Activated CD8-positive, alpha-beta T cell treated with anti-CD3 and anti-CD28 coated beads for 36 hours (primary cell): ENCODE measurements at regions of chr2 and their contacts with region 1.

Region 1: GRCh38 chr2:196239622-196240587 is 68.5 kb upstream of the STK17B start:
- DNase-seq: peak; percentile 94
- ATAC-seq: peak; percentile 64
- H3K4me3 Mint-ChIP-seq: peak overlapping the region; percentile 81
- H3K27ac Mint-ChIP-seq: peak overlapping the region; percentile 87
- H3K4me1 Mint-ChIP-seq: peaks cover 70% of the 10 kb centered on the region
- H3K27me3 Mint-ChIP-seq: no peaks in the 10 kb centered on the region
- CTCF ChIP-seq: no peak

Region 2: DNA sequence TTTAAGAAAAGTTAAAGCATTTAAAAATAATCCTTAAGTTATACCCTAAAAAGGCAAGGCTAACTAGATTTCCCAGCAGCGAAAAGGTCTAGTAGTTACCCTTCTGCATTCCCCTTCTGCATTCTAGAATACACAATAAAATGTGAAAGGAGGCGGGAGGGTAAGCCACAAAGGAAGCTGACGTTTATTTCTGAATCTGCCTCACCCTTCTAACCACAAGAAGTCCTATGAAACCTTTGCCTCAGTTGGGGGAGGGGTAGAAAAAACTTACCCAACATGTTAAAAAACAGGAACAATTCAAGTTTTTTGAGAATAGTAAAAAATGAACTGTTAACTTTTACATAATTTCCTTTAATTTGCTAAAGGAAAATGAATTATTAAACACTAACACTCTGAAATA is 79.8 kb before region 1 on chr2:
- CTCF ChIA-PET with region 1: interaction called, 3 read pairs
- POLR2A ChIA-PET with region 1: interaction called, 56 read pairs
- intact Hi-C with region 1: no loop called
- DNase-seq: peak; percentile 84
- ATAC-seq: peak; percentile 40
- H3K4me3 Mint-ChIP-seq: peak overlapping the region; percentile 99
- H3K27ac Mint-ChIP-seq: peak overlapping the region; percentile 83
- H3K4me1 Mint-ChIP-seq: peaks cover 49% of the 10 kb centered on the region
- H3K27me3 Mint-ChIP-seq: no peaks in the 10 kb centered on the region
- CTCF ChIP-seq: no peak

Region 3: DNA sequence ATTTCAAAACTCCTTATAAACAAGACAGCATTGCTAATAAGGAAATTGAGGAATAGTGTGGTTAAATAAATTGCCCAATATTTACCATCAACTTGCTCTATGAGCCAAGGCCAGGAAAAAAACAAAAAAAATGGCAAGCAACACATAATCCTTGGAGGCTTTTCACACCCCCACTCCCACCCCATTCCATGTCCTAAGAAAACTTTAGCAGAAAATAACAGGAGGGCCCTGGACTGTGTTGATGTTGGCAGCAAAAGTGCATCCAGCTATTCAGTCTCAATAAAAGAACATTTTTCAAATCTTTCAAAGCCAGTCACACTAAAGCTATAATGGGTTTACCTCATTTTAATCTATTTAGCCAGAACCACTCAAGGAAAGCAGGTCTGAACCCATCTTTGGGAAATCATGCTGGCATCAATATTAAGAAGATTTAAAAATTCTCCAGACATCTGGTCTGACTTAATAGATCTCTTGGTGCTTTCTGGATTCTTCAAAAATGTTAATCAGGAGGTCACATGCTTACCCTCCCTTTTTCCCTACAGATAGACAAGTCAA is 33.9 kb before region 1 on chr2:
- CTCF ChIA-PET with region 1: interaction called, 4 read pairs
- POLR2A ChIA-PET with region 1: interaction called, 3 read pairs
- intact Hi-C with region 1: loop called (anchors 1 kb)
- DNase-seq: no peak
- ATAC-seq: no peak
- H3K4me3 Mint-ChIP-seq: no peak overlapping the region
- H3K27ac Mint-ChIP-seq: no peak overlapping the region
- H3K4me1 Mint-ChIP-seq: peaks cover 39% of the 10 kb centered on the region
- H3K27me3 Mint-ChIP-seq: no peaks in the 10 kb centered on the region
- CTCF ChIP-seq: no peak

Region 4: GRCh38 chr2:196225213-196225612 is 14.7 kb before region 1 on chr2:
- CTCF ChIA-PET with region 1: interaction called, 65 read pairs
- POLR2A ChIA-PET with region 1: interaction called, 14 read pairs
- intact Hi-C with region 1: no loop called
- DNase-seq: no peak
- ATAC-seq: no peak
- H3K4me3 Mint-ChIP-seq: peak overlapping the region; percentile 22
- H3K27ac Mint-ChIP-seq: peak overlapping the region; percentile 61
- H3K4me1 Mint-ChIP-seq: peaks cover 84% of the 10 kb centered on the region
- H3K27me3 Mint-ChIP-seq: no peaks in the 10 kb centered on the region
- CTCF ChIP-seq: no peak

Region 5: GRCh38 chr2:196441527-196441926 is 201.6 kb after region 1 on chr2:
- CTCF ChIA-PET with region 1: no interaction called
- POLR2A ChIA-PET with region 1: no interaction called
- intact Hi-C with region 1: no loop called
- DNase-seq: no peak
- ATAC-seq: no peak
- H3K4me3 Mint-ChIP-seq: no peak overlapping the region
- H3K27ac Mint-ChIP-seq: no peak overlapping the region
- H3K4me1 Mint-ChIP-seq: no peaks in the 10 kb centered on the region
- H3K27me3 Mint-ChIP-seq: peaks cover 2% of the 10 kb centered on the region
- CTCF ChIP-seq: no peak

Region 6: GRCh38 chr2:196613302-196613701 is 373.4 kb after region 1 on chr2:
- CTCF ChIA-PET with region 1: no interaction called
- POLR2A ChIA-PET with region 1: no interaction called
- intact Hi-C with region 1: no loop called
- DNase-seq: no peak
- ATAC-seq: no peak
- H3K4me3 Mint-ChIP-seq: no peak overlapping the region
- H3K27ac Mint-ChIP-seq: no peak overlapping the region
- H3K4me1 Mint-ChIP-seq: no peaks in the 10 kb centered on the region
- H3K27me3 Mint-ChIP-seq: no peaks in the 10 kb centered on the region
- CTCF ChIP-seq: no peak